ENCODE measurements at regions of chr19 and their contacts with region 1.

Region 1: DNA sequence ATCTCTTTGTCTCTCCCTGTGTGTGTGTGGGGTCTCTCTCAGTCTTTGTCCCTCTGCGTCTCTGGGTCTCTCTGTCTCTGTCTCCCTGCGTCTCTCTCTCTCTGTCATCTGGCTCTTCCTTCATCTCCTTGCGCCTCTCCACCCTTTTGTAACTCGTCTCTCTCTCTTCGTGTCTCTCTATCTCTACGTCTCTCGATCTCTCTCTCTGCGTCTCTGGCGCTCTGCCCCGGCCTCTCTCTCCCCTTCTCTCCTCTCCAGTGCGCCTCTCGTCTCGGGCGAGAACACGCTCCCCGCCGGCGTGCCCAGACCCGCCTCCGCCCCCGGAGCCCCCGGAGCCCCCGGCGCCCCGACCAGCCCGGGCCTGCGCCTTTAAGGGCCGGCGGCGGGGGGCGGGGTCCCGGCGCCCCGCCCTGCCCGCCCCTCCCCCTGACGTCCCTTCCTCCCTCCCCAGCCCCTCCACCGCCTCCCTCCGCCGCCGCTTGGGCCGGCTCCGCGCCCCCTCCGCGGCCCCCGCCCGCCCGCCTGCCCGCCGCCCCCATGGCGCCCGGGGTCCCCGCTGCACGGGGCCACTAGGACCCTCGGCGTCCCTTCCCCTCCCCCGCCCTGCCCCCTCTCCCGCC is at the start of gene MARK4:
- DNase-seq: peak; percentile 76
- H3K4me3 ChIP-seq: peak within 1 kb of the TSS; percentile 72
- H3K27ac ChIP-seq: no peak within 1 kb of the TSS
- H3K4me1 ChIP-seq: peaks cover 34% of the 10 kb centered on the region
- CTCF ChIP-seq: no peak
- total RNA-seq, gene MARK4: 10.4 and 14.2 TPM in 2 replicates

Region 2: GRCh38 chr19:45340232-45340898 is 89.4 kb after region 1 on chr19 and contains the start of gene KLC3:
- CTCF ChIA-PET with region 1: interaction called, 19 read pairs
- POLR2A ChIA-PET with region 1: no interaction called
- intact Hi-C with region 1: loop called (anchors 5 kb)
- DNase-seq: peak; percentile 52
- H3K4me3 ChIP-seq: peak within 1 kb of the TSS; percentile 56
- H3K27ac ChIP-seq: no peak within 1 kb of the TSS
- H3K4me1 ChIP-seq: peaks cover 8% of the 10 kb centered on the region
- CTCF ChIP-seq: no peak
- total RNA-seq, gene KLC3: not detected in 2 replicates